HepG2 (cell line): ENCODE measurements at regions of chr17 and their contacts with region 1.

Region 1: DNA sequence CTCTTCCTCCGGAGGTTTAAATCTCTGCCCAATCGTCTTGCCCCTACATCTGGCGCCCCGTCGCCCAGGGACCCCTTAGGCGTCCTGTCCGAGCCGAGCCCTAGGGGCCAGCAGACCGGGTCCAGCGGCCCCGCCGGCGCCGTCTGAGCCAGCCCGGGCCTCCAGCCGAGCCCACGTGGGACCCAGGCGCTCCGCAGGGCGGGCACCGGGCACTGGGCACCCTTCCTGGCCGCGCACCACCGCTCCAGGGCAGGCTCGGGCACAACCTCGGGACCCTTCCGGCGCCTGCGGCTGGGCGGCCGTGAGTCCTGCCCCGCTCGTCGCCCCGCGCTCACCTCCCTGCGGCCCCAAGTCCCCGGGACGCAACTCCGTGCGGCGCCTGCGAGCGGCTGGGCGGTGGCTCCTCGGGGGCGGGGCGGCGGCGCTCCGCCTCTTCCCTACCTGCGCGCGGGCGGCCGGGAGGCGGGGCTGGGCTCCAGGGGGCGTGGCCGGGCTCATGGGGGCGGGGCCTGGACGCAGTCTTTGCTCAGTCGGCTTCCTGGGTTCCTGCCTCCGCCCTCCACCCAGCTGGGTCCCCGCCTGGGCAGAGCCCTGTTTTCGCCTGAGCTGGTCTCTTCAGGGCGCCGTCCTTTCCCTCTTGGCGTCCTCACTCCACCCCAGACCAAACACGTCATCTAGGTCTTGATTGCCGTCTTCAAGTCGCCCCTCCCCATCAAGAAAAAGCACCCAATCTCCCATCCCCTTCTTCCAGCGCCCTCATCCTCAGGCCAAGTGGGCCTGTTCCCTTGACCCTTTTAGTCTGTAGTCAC is at the start of gene RHBDF2:
- DNase-seq: peak; percentile 79
- ATAC-seq: peak; percentile 70
- H3K4me3 ChIP-seq: peak within 1 kb of the TSS; percentile 90 to 99 (median 96)
- H3K27ac ChIP-seq: peak within 1 kb of the TSS; percentile 64
- H3K4me1 ChIP-seq: peaks cover 65% of the 10 kb centered on the region
- H3K27me3 ChIP-seq: no peaks in the 10 kb centered on the region; a peak in 1 of 5 replicates
- CTCF ChIP-seq: no peak; the same call in 1 of the 2 replicates
- EP300 ChIP-seq: 0 out of 4 replicates have a peak, but pooled peaks of 1 of the 2 experiments have one; percentile 17
- POLR2A ChIP-seq: peak; percentile 66 to 94; a peak in 3 of 4 replicates
- RAD21 ChIP-seq: peak; percentile 59
- total RNA-seq, gene RHBDF2: 4.2 and 7.8 TPM in 2 replicates

Region 2: DNA sequence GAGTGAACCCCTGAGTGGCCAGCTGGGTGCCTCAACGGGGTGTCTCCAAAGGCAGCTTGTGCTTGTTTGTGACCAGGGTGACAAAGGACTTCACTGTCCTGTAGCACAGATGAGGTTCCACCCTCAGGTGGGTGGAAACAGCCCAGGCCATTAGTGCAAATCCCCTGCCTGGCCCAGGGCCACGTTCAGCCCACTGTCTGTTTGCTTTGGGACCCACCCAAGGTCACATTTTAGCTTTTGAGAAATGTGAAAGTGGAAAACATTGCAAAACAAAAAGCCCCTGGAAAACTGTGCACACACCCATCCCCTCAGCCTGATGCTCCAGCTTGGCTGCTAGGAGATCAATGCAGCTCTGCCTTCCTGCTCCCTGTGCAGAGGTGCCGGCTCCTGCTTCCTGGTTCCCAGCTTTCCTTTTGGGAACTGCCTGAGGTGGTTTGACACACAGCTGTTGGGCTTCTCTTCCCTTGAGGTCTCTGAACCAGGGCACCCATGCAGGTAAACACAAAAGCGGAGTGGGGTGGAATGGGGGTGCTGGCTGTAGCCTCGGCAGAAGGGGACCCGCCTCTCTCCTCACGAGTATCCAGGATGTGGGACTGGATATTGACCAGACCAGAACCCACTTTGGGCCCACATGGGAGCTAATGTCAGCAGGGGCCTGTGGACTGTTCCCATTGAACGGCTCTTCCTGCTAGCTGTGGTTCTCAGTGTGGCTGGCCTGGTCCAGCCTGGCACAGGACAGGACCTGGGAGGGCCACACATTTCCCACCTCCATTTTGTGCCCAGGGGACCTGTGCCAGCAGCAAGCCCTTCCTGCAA is 124.7 kb before region 1 on chr17:
- CTCF ChIA-PET with region 1: no interaction called
- POLR2A ChIA-PET with region 1: interaction called, 19 read pairs
- in situ Hi-C with region 1: no loop called
- intact Hi-C with region 1: no loop called
- DNase-seq: peak; percentile 100
- ATAC-seq: peak; percentile 88
- H3K4me3 ChIP-seq: peak overlapping the region; percentile 63 to 82 (median 66)
- H3K27ac ChIP-seq: peak overlapping the region; percentile 90
- H3K4me1 ChIP-seq: peaks cover 97% of the 10 kb centered on the region
- H3K27me3 ChIP-seq: no peaks in the 10 kb centered on the region
- CTCF ChIP-seq: peak; percentile 35; the same call in 1 of the 2 replicates
- EP300 ChIP-seq: peak; percentile 83 to 97; a peak in 3 of 4 replicates
- POLR2A ChIP-seq: peak in 1 of 2 experiments; percentile 83; a peak in 2 of 4 replicates
- RAD21 ChIP-seq: peak; percentile 53

Region 3: DNA sequence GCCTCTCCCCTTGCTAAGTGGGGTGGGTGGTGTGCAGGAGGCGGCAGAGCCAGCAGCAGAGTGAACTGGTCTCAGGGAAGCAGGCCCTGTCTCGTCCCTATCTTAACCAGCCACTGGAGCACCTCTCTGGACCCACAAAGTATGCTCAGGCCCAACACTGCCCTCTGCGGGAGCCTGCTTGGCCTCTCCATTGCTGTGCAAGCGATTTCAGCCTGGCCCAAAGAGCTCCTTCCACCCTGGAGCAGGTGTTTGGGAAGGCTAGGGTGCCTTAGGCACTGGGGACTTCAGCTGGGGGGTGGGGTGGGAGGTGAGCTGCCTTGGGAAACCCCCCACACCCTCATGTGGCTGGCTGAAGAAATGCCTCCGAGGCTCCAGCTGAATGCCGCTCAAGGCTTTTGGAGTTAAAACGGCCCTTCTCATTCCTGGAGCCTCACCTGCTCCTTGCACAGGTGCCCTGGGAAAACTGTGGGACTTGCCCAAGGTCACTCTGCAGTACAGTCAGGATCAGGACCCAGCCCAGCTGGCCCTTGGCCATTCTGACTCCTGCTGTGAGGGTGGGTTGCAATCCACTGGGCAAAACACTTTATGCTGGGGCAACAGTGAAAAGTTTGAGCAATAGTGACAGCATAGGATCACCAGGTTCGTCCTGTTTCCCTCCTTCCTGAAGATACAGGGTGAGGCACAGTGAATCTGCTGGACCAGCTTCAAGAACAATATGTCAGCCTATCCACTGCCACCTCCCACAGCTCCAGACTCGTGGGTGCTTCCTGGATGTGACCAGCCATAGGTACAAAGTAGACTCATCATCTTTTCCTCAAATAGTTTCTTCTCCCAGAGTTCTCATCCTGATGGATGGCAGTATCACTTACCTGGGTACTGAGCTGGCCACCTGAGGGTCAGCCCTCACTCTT is 42.4 kb before region 1 on chr17:
- CTCF ChIA-PET with region 1: interaction called, 20 read pairs
- POLR2A ChIA-PET with region 1: interaction called, 26 read pairs
- in situ Hi-C with region 1: no loop called
- intact Hi-C with region 1: loop called (anchors 1 kb)
- DNase-seq: peak; percentile 71
- ATAC-seq: peak; percentile 92
- H3K4me3 ChIP-seq: no peak overlapping the region
- H3K27ac ChIP-seq: no peak overlapping the region
- H3K4me1 ChIP-seq: peaks cover 45% of the 10 kb centered on the region
- H3K27me3 ChIP-seq: peaks cover 10 to 28% of the 10 kb centered on the region in 2 experiments; a peak in 4 of 5 replicates
- CTCF ChIP-seq: peak; percentile 86
- EP300 ChIP-seq: no peak
- POLR2A ChIP-seq: no peak
- RAD21 ChIP-seq: peak; percentile 81

Region 4: GRCh38 chr17:76481071-76481655 is 20.1 kb before region 1 on chr17:
- CTCF ChIA-PET with region 1: no interaction called
- POLR2A ChIA-PET with region 1: interaction called, 252 read pairs
- in situ Hi-C with region 1: no loop called
- intact Hi-C with region 1: no loop called
- DNase-seq: no peak
- ATAC-seq: no peak
- H3K4me3 ChIP-seq: no peak overlapping the region
- H3K27ac ChIP-seq: no peak overlapping the region
- H3K4me1 ChIP-seq: peaks cover 34% of the 10 kb centered on the region
- H3K27me3 ChIP-seq: no peaks in the 10 kb centered on the region
- CTCF ChIP-seq: no peak
- EP300 ChIP-seq: no peak
- POLR2A ChIP-seq: no peak
- RAD21 ChIP-seq: no peak

Region 5: GRCh38 chr17:76529224-76530094 is 28.2 kb after region 1 on chr17:
- CTCF ChIA-PET with region 1: no interaction called
- POLR2A ChIA-PET with region 1: interaction called, 19 read pairs
- in situ Hi-C with region 1: no loop called
- intact Hi-C with region 1: no loop called
- DNase-seq: peak; percentile 61
- ATAC-seq: peak; percentile 13
- H3K4me3 ChIP-seq: peak overlapping the region in 1 of 3 experiments; percentile 35; a peak in 1 of 6 replicates
- H3K27ac ChIP-seq: peak overlapping the region; percentile 60
- H3K4me1 ChIP-seq: peaks cover 91% of the 10 kb centered on the region
- H3K27me3 ChIP-seq: no peaks in the 10 kb centered on the region
- CTCF ChIP-seq: peak; percentile 22; the same call in 1 of the 2 replicates
- EP300 ChIP-seq: peak; percentile 19; a peak in 1 of 4 replicates
- POLR2A ChIP-seq: no peak
- RAD21 ChIP-seq: no peak